ENCODE measurements at regions of chr14 and their contacts with region 1.

Region 1: DNA sequence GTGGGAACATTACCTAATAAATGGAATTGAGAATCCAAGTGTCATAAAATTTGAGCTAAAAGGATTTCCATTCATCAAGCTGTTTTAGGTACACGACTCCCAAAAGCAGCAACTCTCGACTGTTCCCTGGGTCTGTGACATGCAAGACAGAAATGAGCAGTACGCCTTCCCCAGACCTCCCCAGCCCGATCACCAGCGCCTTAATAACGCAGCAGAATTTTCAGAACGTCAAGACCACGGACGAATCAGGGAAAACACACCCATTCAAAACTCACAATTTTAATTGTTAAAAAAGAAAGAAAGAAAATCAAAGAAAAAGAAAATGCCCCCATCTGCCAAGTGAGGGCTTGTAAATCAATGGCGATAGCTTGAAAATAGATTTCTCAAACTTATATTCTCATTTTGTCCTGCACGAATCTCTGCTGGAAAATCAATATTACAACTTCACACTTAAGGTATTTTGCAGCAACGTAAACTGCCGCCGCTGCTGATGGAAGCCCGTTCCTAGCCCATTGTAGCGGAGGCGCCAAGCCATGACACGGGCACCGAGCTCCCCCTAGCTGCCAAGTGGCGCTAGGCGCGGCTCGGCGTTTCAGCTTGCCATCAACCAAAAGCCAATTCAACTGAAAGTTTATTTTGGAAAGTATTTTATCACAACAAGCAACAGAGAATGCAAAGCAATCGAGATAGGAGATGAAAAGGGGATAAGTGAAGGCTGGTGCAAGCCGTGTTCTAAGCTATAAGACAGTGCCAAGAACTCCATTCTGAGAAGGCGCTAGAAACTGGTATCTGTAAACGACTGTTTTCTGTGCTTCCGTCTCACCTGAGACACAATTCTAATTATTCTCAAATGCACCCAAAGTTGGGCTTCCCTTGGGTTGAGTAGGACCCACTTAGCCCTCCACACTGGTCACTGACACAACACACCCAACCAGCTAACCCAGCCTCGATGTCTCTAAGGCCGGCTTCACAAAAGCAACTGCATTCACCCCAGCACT is 5.5 kb downstream of the BCL11B start:
- DNase-seq: peak; percentile 91
- H3K4me3 Mint-ChIP-seq: peak overlapping the region; percentile 87
- H3K27ac Mint-ChIP-seq: peak overlapping the region; percentile 99
- H3K4me1 Mint-ChIP-seq: peaks cover 44% of the 10 kb centered on the region
- H3K27me3 Mint-ChIP-seq: no peaks in the 10 kb centered on the region

Region 2: DNA sequence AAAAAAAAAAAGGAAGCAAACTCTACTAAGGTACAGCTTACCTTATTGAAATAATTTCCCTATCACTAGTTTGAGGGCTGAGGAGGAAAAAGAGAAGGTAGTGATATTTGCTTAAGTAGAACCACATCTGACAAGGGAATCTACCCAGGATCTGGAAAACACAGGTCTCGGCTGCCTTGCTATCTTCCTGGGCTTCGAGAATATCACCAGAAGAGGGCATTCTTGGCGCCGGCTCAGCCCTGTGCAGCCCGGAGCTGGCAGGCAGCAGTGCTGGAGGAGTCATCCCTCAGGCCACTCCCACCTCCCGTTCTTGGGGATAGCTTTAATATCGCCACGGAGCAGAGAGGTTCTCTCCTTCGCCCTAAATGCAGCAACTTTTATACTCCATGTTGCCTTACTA is 1288.1 kb before region 1 on chr14:
- CTCF ChIA-PET with region 1: interaction called, 11 read pairs
- POLR2A ChIA-PET with region 1: interaction called, 3 read pairs
- DNase-seq: peak; percentile 81
- H3K4me3 Mint-ChIP-seq: peak overlapping the region; percentile 88
- H3K27ac Mint-ChIP-seq: peak overlapping the region; percentile 97
- H3K4me1 Mint-ChIP-seq: peaks cover 55% of the 10 kb centered on the region
- H3K27me3 Mint-ChIP-seq: no peaks in the 10 kb centered on the region

Region 3: DNA sequence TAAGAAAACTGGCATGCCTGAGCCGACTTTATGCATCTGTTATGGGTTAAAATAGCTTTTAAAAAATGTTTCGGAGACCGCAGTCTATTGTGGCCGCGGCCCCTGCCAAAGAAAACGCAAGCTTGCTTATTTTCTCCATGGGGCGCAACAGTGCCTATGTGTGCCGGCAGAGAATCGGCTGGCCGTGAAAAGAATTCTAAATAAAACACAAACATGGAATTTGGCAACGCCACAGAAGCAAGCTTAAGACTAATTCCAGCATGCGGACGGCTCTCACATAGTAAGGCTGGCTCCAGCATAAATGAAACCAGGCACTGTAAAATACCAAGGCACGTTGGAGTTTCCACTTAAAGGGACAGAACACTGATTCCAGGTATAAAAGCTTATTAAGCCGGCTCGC is 51.2 kb before region 1 on chr14:
- CTCF ChIA-PET with region 1: interaction called, 10 read pairs
- POLR2A ChIA-PET with region 1: no interaction called
- DNase-seq: no peak
- H3K4me3 Mint-ChIP-seq: peak overlapping the region; percentile 49
- H3K27ac Mint-ChIP-seq: peak overlapping the region; percentile 76
- H3K4me1 Mint-ChIP-seq: peaks cover 94% of the 10 kb centered on the region
- H3K27me3 Mint-ChIP-seq: no peaks in the 10 kb centered on the region

Region 4: DNA sequence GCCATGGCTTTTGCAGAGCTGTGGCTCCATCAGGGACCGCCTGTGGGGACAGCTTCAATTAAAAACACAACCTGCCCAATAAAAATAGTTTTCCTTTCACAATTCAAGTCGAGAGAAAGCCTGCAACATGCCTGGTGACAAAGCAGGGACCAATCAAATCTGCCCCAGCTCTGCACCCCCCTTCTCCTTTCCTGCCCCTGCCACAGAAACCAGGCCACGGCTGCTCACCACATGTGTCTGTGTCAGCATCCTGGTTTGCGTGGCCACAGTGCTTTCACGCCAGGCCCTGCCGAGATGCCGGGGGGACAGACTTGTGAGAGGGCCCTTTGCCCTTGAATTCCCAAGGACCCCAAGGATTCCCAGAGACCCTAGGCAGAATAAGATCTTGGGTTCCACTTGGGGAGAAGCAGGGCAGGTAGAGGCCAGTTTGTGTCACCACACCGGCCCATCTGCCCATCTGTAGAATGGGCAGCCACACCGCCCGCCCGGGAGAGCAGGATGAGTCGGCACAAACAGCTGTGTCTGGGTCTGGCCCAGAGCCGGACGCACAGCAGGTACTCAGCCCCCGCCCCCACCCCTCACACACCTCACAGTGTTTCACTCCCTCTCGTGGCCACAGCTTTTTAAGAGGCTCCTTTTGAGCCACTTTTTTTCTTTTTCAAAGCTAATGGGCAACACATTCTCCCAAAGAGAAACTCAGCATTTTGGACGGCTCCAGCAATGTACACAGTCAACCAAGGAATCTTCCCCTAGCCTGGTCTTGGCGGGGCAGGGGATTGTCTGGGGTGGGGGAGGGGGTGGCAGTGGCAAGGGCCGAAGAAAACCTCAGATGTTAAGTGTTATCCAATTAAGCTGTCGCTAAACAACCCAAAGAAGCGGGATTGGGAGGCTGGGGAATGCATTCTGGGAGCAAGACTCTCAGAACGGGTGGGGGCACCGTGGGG is 36.0 kb before region 1 on chr14:
- CTCF ChIA-PET with region 1: interaction called, 192 read pairs
- POLR2A ChIA-PET with region 1: interaction called, 6 read pairs
- DNase-seq: peak; percentile 91
- H3K4me3 Mint-ChIP-seq: peak overlapping the region; percentile 74
- H3K27ac Mint-ChIP-seq: peak overlapping the region; percentile 98
- H3K4me1 Mint-ChIP-seq: peaks cover 97% of the 10 kb centered on the region
- H3K27me3 Mint-ChIP-seq: no peaks in the 10 kb centered on the region

Region 5: DNA sequence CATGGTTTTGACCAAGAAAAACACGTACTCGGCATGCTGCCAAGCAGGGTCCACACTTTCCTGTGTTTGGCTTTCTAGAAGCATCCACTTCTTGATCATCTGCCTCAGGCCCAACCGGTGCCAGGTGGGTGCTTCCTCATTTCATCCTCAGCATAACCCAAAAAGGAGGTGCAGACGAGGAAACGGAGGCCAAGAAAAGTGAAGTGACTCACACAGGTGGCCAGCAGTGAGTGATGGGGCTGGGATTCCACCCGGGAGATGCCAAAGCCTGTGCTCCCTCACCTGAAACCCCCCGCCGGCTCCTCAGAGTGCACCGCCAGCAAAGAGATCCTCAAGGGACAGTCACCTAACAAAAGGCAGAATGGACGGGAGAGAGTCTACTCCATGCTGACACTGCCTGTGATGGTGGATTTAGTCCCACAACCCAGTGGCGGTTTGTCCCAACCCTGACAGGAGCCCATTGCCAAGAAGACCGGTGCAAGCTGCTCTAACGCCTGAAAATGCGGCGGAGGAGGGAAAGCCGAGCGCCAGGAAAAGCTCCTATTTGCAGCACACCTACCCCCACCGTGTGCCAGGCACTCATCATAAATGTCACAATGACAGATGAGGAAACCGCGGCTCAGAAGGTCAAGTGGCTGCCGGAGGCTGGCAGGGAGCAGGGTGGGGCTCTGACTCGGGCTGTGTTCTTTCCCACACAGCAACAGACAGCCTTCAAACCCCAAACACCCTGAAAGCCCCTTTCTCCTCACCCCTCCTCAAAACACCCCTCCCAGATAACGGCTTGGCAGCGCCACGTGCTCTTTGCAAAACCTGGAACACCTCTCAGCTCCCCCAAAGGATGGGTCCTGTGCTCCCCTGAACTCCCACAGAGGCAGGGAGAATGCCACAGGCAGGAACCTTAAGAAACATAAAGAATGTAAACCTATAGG is 13.3 kb before region 1 on chr14:
- CTCF ChIA-PET with region 1: interaction called, 26 read pairs
- POLR2A ChIA-PET with region 1: interaction called, 4 read pairs
- DNase-seq: peak; percentile 68
- H3K4me3 Mint-ChIP-seq: peak overlapping the region; percentile 74
- H3K27ac Mint-ChIP-seq: peak overlapping the region; percentile 94
- H3K4me1 Mint-ChIP-seq: peaks cover 94% of the 10 kb centered on the region
- H3K27me3 Mint-ChIP-seq: no peaks in the 10 kb centered on the region

Region 6: DNA sequence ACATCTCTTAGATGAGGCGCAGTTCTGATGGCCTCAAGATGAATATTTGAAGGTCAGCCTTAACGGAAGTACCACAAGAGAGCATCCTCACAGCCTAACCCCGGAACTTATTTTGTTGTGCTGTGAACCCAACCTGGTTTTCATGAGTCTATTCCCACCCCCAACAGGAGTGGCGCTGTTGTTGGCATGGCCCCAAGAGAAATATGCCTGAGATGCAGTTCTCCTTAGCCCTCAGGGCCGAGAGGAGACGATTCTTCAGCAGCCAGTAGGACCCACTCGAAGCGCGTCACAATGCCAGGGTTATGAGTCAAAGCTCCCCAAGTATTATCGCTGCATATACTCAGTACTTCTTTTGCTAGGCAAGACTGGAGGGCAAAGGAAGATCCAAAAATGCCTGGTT is 30.0 kb after region 1 on chr14:
- CTCF ChIA-PET with region 1: no interaction called
- POLR2A ChIA-PET with region 1: no interaction called
- DNase-seq: no peak
- H3K4me3 Mint-ChIP-seq: no peak overlapping the region
- H3K27ac Mint-ChIP-seq: no peak overlapping the region
- H3K4me1 Mint-ChIP-seq: no peaks in the 10 kb centered on the region
- H3K27me3 Mint-ChIP-seq: peaks cover 23% of the 10 kb centered on the region

Measured in activated CD4-positive, alpha-beta T cell treated with anti-CD3 and anti-CD28 coated beads, Interleukin-2, amount 10 ng/mL, durations not matched to agents 7 days and 5 days (primary cell).